H1 (cell line): ENCODE measurements at regions of chr3 and their contacts with region 1.

Region 1: GRCh38 chr3:195106418-195106906 is 164.5 kb downstream of the XXYLT1 start:
- DNase-seq: peak in 1 of 2 experiments; percentile 90
- H3K4me3 ChIP-seq: peak overlapping the region in 1 of 4 experiments; percentile 4; a peak in 1 of 8 replicates
- H3K27ac ChIP-seq: no peak overlapping the region
- H3K4me1 ChIP-seq: peaks cover 2 to 4% (median 2%) of the 10 kb centered on the region in 4 experiments; a peak in 4 of 7 replicates
- H3K27me3 ChIP-seq: no peaks in the 10 kb centered on the region
- CTCF ChIP-seq: peak; percentile 84 to 96 (median 90)
- EP300 ChIP-seq: 0 out of 3 replicates have a peak, but pooled peaks of 1 of the 2 experiments have one; percentile 41
- POLR2A ChIP-seq: no peak
- RAD21 ChIP-seq: peak; percentile 85 to 91

Region 2: GRCh38 chr3:195048059-195048905 is 58.2 kb before region 1 on chr3:
- CTCF ChIA-PET with region 1: interaction called, 13 read pairs
- POLR2A ChIA-PET with region 1: no interaction called
- DNase-seq: no peak
- H3K4me3 ChIP-seq: no peak overlapping the region
- H3K27ac ChIP-seq: no peak overlapping the region
- H3K4me1 ChIP-seq: peaks cover 0 to 5% (median 2%) of the 10 kb centered on the region in 4 experiments; a peak in 3 of 7 replicates
- H3K27me3 ChIP-seq: no peaks in the 10 kb centered on the region
- CTCF ChIP-seq: no peak
- EP300 ChIP-seq: no peak
- POLR2A ChIP-seq: no peak
- RAD21 ChIP-seq: no peak

Region 3: GRCh38 chr3:195094171-195094921 is 12.1 kb before region 1 on chr3:
- CTCF ChIA-PET with region 1: interaction called, 21 read pairs
- POLR2A ChIA-PET with region 1: no interaction called
- DNase-seq: no peak
- H3K4me3 ChIP-seq: no peak overlapping the region
- H3K27ac ChIP-seq: no peak overlapping the region
- H3K4me1 ChIP-seq: no peaks in the 10 kb centered on the region; a peak in 3 of 7 replicates
- H3K27me3 ChIP-seq: no peaks in the 10 kb centered on the region
- CTCF ChIP-seq: peak in 1 of 3 experiments; percentile 13; a peak in 1 of 4 replicates
- EP300 ChIP-seq: no peak
- POLR2A ChIP-seq: no peak
- RAD21 ChIP-seq: peak; percentile 20 to 37; a peak in 2 of 4 replicates

Region 4: DNA sequence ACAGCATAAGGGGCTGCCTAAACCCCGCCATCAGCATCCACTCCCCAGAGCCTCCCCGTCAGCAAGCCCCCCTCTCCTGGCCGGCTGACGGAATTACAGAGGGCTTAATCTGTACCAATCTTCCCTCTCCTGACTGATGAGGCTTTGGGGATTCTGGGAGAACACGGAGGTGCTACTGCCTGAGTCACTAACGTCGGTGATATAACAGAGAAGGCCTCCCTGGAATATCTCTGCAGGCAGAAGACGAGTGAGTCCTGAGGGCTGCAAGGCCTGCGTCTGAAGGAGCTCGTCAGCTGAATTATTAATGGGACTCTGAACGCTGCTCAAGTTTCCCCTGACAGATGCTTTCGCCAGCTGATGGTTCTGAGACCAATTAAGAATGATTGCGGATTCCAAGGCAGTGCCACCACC is 16.8 kb after region 1 on chr3:
- CTCF ChIA-PET with region 1: interaction called, 26 read pairs
- POLR2A ChIA-PET with region 1: no interaction called
- DNase-seq: no peak
- H3K4me3 ChIP-seq: no peak overlapping the region
- H3K27ac ChIP-seq: no peak overlapping the region
- H3K4me1 ChIP-seq: peaks cover 4 to 15% (median 10%) of the 10 kb centered on the region in 4 experiments
- H3K27me3 ChIP-seq: no peaks in the 10 kb centered on the region
- CTCF ChIP-seq: peak; percentile 53 to 64 (median 62)
- EP300 ChIP-seq: no peak
- POLR2A ChIP-seq: no peak
- RAD21 ChIP-seq: peak; percentile 48 to 69; a peak in 3 of 4 replicates